Colonic mucosa (tissue), 4 donors: ENCODE measurements at regions of chr6 and their contacts with region 1.

Region 1: DNA sequence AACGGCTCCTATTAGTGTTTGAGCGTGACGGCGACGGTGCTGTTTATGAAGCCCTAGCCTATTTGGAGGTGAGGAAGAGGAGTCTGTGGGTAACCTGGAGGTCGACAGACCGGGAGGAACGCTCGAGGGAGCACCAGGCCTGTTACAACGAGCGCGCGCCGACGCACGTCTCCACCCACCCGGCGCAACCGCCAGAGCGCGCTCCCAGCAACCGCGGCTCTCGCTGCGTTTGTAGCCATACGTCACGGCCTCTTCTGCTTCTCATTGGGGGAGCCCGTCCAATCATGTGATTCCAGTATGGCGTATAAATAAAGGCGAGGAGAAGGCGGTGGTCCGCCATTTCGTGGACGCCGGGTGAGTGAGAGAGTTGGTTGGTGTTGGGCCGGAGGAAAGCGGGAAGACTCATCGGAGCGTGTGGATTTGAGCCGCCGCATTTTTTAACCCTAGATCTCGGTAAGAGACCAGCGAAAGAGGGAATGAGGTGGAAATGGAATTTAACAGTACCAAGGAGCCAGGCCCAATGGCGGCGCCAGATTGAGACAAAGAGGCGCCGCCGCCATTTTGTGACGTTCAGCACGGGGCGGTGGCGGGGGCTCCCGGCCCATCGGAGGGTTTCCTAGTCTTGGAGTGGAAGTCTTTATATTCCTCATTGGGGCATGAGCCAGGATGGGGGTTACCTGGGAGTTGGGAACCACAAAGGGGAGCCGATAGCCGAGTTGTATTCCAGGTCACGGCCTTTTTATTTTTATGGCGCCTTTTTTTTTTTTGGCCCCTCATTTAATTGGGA is at the start of gene SRSF3:
- DNase-seq: peak; percentile 98
- H3K4me3 ChIP-seq: peak within 1 kb of the TSS; percentile 49
- H3K27ac ChIP-seq: peak within 1 kb of the TSS; percentile 97
- H3K4me1 ChIP-seq: peaks cover 5% of the 10 kb centered on the region
- H3K27me3 ChIP-seq: no peaks in the 10 kb centered on the region
- CTCF ChIP-seq: peak; percentile 28
- total RNA-seq, gene SRSF3: 252 to 372 TPM

Region 2: GRCh38 chr6:36033935-36034334 is 560.3 kb before region 1 on chr6:
- intact Hi-C with region 1: no loop called
- DNase-seq: no peak
- H3K4me3 ChIP-seq: no peak overlapping the region
- H3K27ac ChIP-seq: no peak overlapping the region
- H3K4me1 ChIP-seq: no peaks in the 10 kb centered on the region
- H3K27me3 ChIP-seq: no peaks in the 10 kb centered on the region
- CTCF ChIP-seq: no peak

Region 3: DNA sequence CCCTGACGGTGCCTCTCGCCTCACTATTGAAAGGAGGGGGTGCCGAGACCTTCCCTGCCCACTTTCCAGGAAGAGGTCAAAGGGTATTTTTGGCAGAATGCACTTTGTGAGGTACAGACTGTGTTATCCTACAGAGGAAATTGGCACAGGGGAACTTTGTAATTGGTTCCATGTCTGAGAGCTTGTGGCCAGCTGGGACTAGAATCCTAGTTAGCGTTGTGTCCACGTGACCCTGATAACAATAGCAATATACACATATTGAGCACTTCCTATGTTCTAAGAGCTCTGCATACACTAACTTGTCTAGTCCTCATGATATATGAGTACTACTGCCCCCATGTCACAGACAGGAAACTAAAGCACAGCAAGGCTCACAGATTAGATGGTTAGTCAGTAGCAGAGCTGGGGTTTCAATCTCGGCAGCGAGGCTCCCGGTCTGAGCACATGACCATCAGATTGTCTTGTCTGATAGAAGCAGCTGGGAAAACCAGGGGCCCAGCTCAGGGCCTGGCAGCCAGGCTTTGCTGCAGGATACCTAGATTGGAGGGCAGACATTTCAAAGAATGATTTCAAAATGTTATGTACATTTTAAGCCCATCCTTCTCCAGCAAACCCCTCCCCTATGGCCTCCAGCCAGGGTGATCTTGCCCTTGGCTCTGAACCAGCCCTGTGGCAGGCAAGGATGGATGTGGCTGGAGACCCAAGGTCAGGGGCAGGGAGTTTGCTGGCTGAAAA is 462.5 kb before region 1 on chr6:
- intact Hi-C with region 1: no loop called
- DNase-seq: peak; percentile 84
- H3K4me3 ChIP-seq: peak overlapping the region; percentile 62
- H3K27ac ChIP-seq: peak overlapping the region; percentile 97
- H3K4me1 ChIP-seq: peaks cover 8% of the 10 kb centered on the region
- H3K27me3 ChIP-seq: no peaks in the 10 kb centered on the region
- CTCF ChIP-seq: no peak

Region 4: DNA sequence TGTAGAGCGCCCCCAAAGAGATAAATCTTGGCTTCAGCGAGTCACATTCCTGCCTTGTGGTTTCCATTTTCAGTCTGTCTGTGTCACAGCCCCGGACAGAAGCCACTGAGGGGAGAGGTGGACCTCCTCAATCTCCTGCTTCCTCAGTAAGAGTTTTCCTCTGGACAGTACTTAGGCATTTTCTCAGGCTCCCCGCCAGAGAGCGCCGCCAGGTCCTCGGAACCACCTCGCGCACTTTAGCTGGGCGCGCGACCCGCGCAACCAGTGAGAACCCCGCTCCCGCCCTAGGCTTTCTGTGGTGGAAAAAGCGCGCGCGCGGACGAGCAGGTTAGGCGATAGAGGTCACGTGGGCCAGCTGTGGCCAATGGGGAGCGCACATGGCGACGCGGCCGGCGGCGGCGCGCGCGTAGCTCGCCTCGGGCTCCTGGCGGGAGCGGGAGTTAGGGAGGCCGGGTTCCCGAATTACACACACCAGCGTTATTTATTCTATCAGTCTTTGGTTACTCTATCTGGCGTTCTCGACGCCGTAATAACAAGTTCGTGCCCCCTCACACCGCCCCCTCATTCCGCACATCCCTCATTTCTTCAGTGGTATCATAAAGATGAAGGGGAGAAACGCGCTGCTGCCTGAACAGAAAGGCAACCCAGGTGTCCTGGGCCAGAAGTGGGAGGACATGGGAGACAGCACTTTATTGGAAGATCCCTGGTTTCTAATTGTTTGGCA is 171.0 kb before region 1 on chr6:
- intact Hi-C with region 1: loop called (anchors 5 kb)
- DNase-seq: peak; percentile 99
- H3K4me3 ChIP-seq: peak overlapping the region; percentile 41
- H3K27ac ChIP-seq: peak overlapping the region; percentile 84
- H3K4me1 ChIP-seq: no peaks in the 10 kb centered on the region
- H3K27me3 ChIP-seq: no peaks in the 10 kb centered on the region
- CTCF ChIP-seq: peak; percentile 51

Region 5: DNA sequence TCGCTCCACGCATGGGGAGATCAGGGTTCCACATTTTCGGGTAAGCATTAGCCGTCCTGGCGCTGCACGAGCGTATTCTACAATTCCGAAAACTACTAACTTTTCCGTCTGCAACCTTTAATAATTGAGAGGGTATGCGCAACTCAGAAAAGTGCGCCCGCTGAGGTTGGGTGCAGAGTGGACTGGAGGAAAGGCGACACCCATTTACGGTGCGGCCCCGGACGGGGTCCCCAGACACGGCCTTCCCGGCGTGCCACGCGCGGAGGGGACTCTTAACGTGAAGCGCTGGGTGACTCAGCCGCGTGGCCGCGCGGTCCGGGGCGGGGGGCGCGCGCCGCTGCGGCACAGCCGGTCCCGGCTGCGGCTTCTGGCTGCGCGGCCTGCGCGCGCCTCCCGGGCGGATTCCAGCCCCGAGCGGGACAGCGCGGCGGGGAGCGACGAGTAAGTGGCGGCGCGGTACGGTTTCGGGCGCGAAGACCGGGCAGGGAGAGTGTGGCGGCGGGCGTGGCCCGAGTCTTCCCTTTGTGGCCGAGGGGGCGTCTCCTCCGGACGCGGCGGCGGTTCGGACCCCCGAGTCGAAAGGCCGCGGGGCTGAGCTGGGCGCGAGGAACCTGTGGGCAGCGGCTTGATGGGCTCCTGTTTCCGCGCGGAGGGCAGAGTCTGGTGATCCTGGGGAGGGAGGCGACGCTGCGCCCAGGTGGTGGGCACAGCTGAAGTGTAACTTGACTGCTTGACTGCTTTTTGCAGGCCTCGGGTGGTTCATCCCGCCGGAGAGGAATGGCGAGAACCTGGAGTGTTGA is 151.4 kb before region 1 on chr6 and contains the starts of genes KCTD20 and PXT1:
- intact Hi-C with region 1: loop called (anchors 5 kb)
- DNase-seq: peak; percentile 89
- H3K4me3 ChIP-seq: peak within 1 kb of the TSS; percentile 94
- H3K27ac ChIP-seq: peak within 1 kb of the TSS; percentile 98
- H3K4me1 ChIP-seq: peaks cover 10% of the 10 kb centered on the region
- H3K27me3 ChIP-seq: no peaks in the 10 kb centered on the region
- CTCF ChIP-seq: no peak
- total RNA-seq, gene KCTD20: 23.8 to 34.9 TPM
- total RNA-seq, gene PXT1: not detected

Region 6: DNA sequence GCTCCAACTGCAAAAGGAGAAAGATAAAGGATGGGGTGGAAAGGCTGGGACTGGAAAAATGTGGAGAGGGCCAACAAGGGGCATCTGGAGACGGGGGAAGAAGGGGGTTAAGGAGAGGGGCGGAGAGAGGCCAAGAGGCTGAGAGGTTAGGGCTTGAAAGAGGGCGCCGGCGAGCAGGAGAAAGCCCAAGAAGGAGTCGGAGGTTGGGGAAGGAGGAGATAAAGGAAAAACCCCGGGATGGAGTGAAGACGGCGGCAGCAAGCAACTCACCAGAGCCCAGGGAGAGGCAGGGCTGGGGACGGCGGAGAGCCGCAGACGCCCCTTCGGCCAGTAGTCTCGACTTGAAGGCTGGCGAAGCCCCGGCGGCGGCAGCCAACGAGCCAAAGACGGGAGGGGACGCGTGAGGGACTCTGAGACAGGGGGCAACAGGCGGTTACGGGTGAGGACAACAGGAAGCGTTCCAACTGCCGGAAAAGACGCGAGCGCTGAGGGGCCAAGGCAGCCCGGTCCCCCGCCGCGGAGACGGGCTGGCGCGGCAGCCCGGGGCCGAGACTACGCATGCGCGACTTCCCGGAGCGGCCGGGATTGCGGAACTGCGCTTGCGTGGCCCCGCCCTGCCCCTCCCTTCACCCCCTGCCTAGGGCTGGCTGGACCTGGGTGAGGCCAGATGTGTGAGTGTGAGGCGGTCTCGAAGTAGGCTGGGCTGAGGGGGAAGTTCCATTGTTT is 47.1 kb before region 1 on chr6 and contains the start of gene STK38:
- intact Hi-C with region 1: loop called (anchors 5 kb)
- DNase-seq: peak; percentile 95
- H3K4me3 ChIP-seq: peak within 1 kb of the TSS; percentile 80
- H3K27ac ChIP-seq: peak within 1 kb of the TSS; percentile 95
- H3K4me1 ChIP-seq: no peaks in the 10 kb centered on the region
- H3K27me3 ChIP-seq: no peaks in the 10 kb centered on the region
- CTCF ChIP-seq: no peak
- total RNA-seq, gene STK38: 55.9 to 83.4 TPM

Region 7: DNA sequence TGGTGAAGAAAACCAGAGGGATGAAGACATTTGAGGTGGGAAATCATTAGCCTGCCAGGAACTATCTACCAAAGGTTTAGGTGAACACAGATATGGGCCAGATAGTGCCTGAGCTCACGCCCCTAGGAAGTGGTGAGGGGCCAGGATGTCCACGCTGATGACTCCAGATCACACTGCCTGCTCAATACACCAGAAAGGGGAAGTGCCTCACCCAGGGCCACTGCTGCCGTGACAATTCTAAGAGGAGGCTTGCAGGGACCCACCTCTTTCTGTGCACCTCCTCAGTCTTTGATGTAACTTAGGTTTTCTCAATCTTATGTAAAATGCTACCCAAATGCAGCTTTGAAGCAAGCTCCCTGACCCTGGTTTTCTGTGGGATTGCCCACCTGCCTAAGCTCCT is 98.0 kb after region 1 on chr6:
- intact Hi-C with region 1: no loop called
- DNase-seq: no peak
- H3K4me3 ChIP-seq: no peak overlapping the region
- H3K27ac ChIP-seq: no peak overlapping the region
- H3K4me1 ChIP-seq: no peaks in the 10 kb centered on the region
- H3K27me3 ChIP-seq: no peaks in the 10 kb centered on the region
- CTCF ChIP-seq: no peak

Region 8: DNA sequence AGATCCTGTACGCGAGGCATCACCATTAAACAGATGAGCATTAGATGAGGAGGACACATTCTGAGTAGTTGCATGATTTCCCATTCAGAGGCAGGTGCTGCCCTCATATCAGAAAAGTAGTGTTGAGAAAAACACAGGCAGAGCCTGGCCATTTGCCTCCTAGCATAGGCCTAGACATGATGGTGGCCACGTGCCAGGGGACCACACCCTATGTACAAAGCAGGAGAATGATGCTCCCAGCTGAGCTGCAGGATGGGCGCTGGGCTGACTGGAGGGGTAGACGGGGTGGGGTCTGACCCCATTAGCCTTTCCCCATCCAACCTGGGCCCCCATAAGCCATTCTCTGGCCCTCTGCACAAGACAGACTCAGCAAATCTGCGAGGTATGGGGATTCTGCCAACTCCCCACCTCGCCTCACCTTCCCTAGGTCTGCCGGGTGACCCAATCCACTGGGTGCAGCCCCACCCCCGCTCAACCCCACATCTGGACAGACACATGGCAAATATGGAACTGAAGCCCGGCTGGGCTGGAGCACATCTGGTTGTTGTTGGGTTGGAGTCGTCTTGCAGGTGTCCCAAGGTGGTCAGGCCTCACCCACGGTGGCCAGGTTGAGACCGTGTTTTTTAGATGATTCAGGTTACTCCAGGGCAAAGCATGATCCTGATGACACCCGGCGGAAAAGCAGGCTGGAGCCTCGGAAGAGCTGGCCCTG is 374.2 kb after region 1 on chr6:
- intact Hi-C with region 1: no loop called
- DNase-seq: peak; percentile 45
- H3K4me3 ChIP-seq: no peak overlapping the region
- H3K27ac ChIP-seq: no peak overlapping the region
- H3K4me1 ChIP-seq: no peaks in the 10 kb centered on the region
- H3K27me3 ChIP-seq: no peaks in the 10 kb centered on the region
- CTCF ChIP-seq: no peak